ENCODE measurements at regions of chr5 and their contacts with region 1.

Region 1: GRCh38 chr5:96614110-96614691 is 48.0 kb upstream of the CAST start:
- DNase-seq: peak; percentile 65
- ATAC-seq: peak; percentile 94

Region 2: GRCh38 chr5:96692441-96692840 is 78.2 kb after region 1 on chr5:
- intact Hi-C with region 1: no loop called
- DNase-seq: no peak
- ATAC-seq: no peak

Region 3: GRCh38 chr5:96729156-96729555 is 115.0 kb after region 1 on chr5:
- intact Hi-C with region 1: loop called (anchors 10 kb)
- DNase-seq: no peak
- ATAC-seq: no peak

Region 4: DNA sequence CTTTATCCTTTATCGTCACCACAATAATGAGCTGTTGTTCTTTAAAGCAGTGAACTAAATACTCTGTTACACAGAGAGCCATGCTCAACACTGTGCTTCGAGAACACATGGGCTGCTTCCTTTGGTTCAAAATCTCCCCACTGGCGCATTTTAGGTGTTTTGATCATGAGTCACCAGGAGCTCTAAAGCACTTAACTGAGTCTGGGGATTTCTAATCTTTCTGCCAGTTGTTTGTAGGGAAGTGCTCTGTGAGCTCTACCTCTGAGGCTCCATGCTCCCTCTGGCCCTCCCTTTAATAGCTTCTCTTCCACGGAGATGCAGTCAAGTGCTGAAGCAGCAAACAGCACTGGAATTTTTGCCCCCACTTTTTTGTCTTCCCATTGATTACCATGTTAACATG is 279.1 kb after region 1 on chr5:
- intact Hi-C with region 1: loop called (anchors 5 kb)
- DNase-seq: no peak
- ATAC-seq: no peak

Measured in sciatic nerve (tissue), 2 donors.